ENCODE measurements at regions of chr7 and their contacts with region 1.

Region 1: GRCh38 chr7:105652359-105652993 is 71.2 kb upstream of the EFCAB10 start:
- DNase-seq: peak; percentile 69 to 92
- H3K4me3 ChIP-seq: no peak overlapping the region
- H3K27ac ChIP-seq: no peak overlapping the region; the same call in 1 of the 2 replicates
- H3K4me1 ChIP-seq: peaks cover 33 to 58% (median 36%) of the 10 kb centered on the region in 4 experiments
- H3K27me3 ChIP-seq: no peaks in the 10 kb centered on the region; a peak in 1 of 7 replicates
- CTCF ChIP-seq: peak; percentile 90 to 97 (median 96)
- EP300 ChIP-seq: no peak
- POLR2A ChIP-seq: no peak
- RAD21 ChIP-seq: peak; percentile 90 to 92

Region 2: GRCh38 chr7:105664816-105665525 is 12.5 kb after region 1 on chr7:
- CTCF ChIA-PET with region 1: interaction called, 36 read pairs
- POLR2A ChIA-PET with region 1: no interaction called
- DNase-seq: no peak
- H3K4me3 ChIP-seq: no peak overlapping the region
- H3K27ac ChIP-seq: peak overlapping the region; percentile 29; the same call in 1 of the 2 replicates
- H3K4me1 ChIP-seq: peaks cover 10 to 16% (median 13%) of the 10 kb centered on the region in 4 experiments
- H3K27me3 ChIP-seq: no peaks in the 10 kb centered on the region
- CTCF ChIP-seq: no peak
- EP300 ChIP-seq: peak in 1 of 2 experiments; percentile 85; a peak in 2 of 3 replicates
- POLR2A ChIP-seq: no peak
- RAD21 ChIP-seq: peak in 1 of 2 experiments; percentile 5; a peak in 1 of 4 replicates

Region 3: DNA sequence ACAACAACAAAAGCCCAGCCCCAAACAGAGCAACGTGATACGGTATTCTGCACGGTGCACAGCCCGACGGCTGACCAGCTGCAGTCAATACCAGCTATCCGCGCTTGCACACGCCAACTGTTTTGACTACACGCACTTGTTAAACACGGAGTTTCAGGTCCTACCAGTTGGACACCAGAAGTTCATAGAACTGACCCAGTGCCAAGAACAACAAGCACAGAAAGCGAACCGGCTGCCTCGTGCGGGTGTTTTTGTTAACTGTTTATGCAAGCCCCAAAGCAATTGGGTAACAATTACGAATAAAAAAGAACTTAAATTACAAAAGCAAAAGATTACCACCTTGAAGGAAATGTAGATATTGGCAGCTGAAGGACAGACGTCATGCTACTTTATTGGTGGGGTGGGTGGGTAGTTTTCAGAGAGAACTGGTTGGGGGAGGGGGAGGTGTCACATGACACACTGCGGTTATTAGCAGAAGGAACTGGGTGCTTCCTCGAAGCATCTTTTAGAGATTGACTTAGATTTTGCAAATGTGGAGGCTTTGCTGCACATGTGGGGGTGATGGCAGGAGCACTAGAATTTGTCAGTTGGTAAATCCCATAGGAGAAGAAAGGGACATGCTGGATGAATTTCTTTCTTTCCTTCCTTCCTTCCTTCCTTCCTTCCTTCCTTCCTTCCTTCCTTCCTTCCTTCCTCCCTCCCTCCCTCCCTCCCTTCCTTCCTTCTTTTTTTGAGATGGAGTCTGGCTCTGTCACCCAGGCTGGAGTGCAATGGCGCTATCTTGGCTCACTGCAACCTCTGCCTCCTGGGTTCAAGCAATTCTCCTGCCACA is 39.5 kb after region 1 on chr7:
- CTCF ChIA-PET with region 1: interaction called, 69 read pairs
- POLR2A ChIA-PET with region 1: interaction called, 3 read pairs
- DNase-seq: no peak
- H3K4me3 ChIP-seq: peak overlapping the region; percentile 11 to 48 (median 30); a peak in 5 of 8 replicates
- H3K27ac ChIP-seq: peak overlapping the region; percentile 42; the same call in 1 of the 2 replicates
- H3K4me1 ChIP-seq: peaks cover 31 to 48% (median 40%) of the 10 kb centered on the region in 4 experiments
- H3K27me3 ChIP-seq: no peaks in the 10 kb centered on the region
- CTCF ChIP-seq: no peak
- EP300 ChIP-seq: no peak
- POLR2A ChIP-seq: no peak
- RAD21 ChIP-seq: no peak

Region 4: DNA sequence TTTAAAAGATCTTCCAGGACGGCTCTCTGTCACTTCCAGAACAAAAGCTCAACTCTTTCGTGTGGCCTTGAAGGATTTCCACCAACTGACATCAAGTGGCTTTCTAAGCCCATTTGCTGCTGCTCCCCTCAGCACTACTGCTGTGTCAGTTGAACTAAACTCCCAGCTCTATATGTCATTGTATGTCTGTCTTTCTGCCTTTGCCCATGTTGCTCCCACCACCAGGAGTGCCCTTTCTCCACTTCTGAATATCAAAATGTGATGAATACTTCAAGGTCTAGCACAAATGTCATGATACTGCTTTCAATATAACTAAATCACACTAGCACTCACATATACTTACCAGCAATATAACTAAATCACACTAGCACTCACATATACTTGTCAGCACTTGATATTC is 85.7 kb after region 1 on chr7:
- CTCF ChIA-PET with region 1: interaction called, 21 read pairs
- POLR2A ChIA-PET with region 1: no interaction called
- DNase-seq: no peak
- H3K4me3 ChIP-seq: no peak overlapping the region
- H3K27ac ChIP-seq: no peak overlapping the region
- H3K4me1 ChIP-seq: peaks cover 0 to 3% (median 0%) of the 10 kb centered on the region in 4 experiments; a peak in 1 of 7 replicates
- H3K27me3 ChIP-seq: no peaks in the 10 kb centered on the region
- CTCF ChIP-seq: peak in 1 of 3 experiments; percentile 27; a peak in 1 of 4 replicates
- EP300 ChIP-seq: no peak
- POLR2A ChIP-seq: no peak
- RAD21 ChIP-seq: peak in 1 of 2 experiments; percentile 23; a peak in 1 of 4 replicates

Region 5: DNA sequence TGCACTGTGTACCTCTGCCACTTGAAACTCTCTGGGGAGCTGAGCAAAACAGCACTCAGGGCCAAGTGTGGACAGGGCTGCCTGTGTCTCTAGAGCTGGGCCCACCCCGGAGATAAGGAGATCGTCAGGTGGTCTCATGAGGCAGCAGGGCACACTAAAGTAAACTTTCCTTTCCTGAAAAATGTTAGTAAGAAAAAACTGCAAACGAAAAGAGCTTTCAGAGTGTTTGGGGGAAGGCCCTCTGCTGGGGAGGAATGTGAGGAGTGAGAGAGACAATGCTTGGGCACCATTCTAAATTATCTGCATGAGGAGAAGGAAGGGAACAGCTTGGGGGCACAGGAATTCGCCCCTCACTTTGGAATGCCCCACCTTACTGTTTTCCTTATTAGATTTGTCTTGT is 96.2 kb after region 1 on chr7:
- CTCF ChIA-PET with region 1: interaction called, 78 read pairs
- POLR2A ChIA-PET with region 1: interaction called, 5 read pairs
- DNase-seq: no peak
- H3K4me3 ChIP-seq: no peak overlapping the region
- H3K27ac ChIP-seq: peak overlapping the region; percentile 49; the same call in 1 of the 2 replicates
- H3K4me1 ChIP-seq: peaks cover 0 to 13% (median 6%) of the 10 kb centered on the region in 4 experiments; a peak in 6 of 7 replicates
- H3K27me3 ChIP-seq: no peaks in the 10 kb centered on the region
- CTCF ChIP-seq: peak in 1 of 3 experiments; percentile 22; a peak in 1 of 4 replicates
- EP300 ChIP-seq: no peak
- POLR2A ChIP-seq: no peak
- RAD21 ChIP-seq: peak; percentile 24 to 44; a peak in 3 of 4 replicates

Region 6: DNA sequence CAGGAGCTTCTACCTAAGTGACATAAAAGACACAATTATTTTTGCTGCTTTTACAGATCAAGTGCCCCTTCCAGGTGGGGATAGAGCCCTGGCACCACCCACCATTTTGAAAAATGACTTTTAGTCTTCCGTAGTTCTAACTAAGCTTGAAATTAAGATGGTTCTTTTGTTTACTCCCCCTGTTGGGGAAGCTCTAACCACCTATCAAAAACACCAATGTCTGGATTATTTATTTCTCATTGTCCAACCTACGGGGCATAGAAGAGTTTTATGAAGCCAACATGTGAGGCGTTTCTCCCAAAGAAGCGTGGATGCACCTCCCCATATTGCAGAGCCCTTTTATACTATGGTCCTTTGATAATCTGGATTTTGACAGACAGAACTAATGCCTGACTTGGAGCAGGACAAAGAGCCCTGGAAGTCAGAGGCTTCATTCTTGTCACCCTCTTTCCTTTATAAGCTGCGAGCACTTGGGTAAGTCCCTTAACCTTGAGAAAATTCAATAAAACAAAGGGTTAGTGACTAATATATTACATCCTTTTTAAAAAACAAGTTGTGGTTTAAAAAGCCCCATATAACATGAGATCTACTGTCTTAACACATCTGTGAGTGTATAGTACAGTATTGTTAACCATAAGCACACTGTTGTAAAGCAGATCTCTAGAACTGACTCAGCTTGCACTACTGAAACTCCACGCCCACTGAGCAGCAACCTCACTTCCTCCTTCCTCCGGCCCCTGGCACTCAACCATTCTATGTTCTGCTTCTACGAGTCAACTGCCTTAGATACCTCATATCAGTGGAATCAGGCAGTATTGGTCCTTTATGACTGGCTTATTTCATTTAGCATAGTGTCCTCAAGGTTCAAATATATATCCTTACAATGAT is 156.5 kb after region 1 on chr7:
- CTCF ChIA-PET with region 1: interaction called, 11 read pairs
- POLR2A ChIA-PET with region 1: no interaction called
- DNase-seq: no peak
- H3K4me3 ChIP-seq: no peak overlapping the region
- H3K27ac ChIP-seq: no peak overlapping the region
- H3K4me1 ChIP-seq: peaks cover 6 to 14% (median 9%) of the 10 kb centered on the region in 4 experiments; a peak in 5 of 7 replicates
- H3K27me3 ChIP-seq: no peaks in the 10 kb centered on the region
- CTCF ChIP-seq: no peak
- EP300 ChIP-seq: no peak
- POLR2A ChIP-seq: no peak
- RAD21 ChIP-seq: no peak

Measured in H1 (cell line).